AG04450 (cell line): ENCODE measurements at regions of chr7 and their contacts with region 1.

Region 1: GRCh38 chr7:93359520-93360198 is 127.5 kb downstream of the VPS50 start:
- DNase-seq: no peak
- H3K4me3 ChIP-seq: no peak overlapping the region
- H3K27ac ChIP-seq: no peak overlapping the region
- H3K27me3 ChIP-seq: no peaks in the 10 kb centered on the region
- CTCF ChIP-seq: no peak

Region 2: GRCh38 chr7:93374345-93374940 is 14.8 kb after region 1 on chr7:
- CTCF ChIA-PET with region 1: interaction called, 24 read pairs
- POLR2A ChIA-PET with region 1: no interaction called
- DNase-seq: peak; percentile 2
- H3K4me3 ChIP-seq: no peak overlapping the region
- H3K27ac ChIP-seq: no peak overlapping the region
- H3K27me3 ChIP-seq: peaks cover 2% of the 10 kb centered on the region
- CTCF ChIP-seq: peak; percentile 94